GM12878 (cell line): ENCODE measurements at regions of chr16 and their contacts with region 1.

Region 1: GRCh38 chr16:22217889-22218730 is 12.0 kb downstream of the EEF2K start:
- DNase-seq: peak; percentile 83
- ATAC-seq: peak; percentile 99
- H3K4me3 ChIP-seq: peak overlapping the region; percentile 51; the same call in 1 of the 2 replicates
- H3K27ac ChIP-seq: peak overlapping the region; percentile 54
- H3K4me1 ChIP-seq: peaks cover 12% of the 10 kb centered on the region
- H3K27me3 ChIP-seq: no peaks in the 10 kb centered on the region
- CTCF ChIP-seq: no peak
- EP300 ChIP-seq: peak in 1 of 2 experiments; percentile 46; a peak in 1 of 4 replicates
- POLR2A ChIP-seq: peak; percentile 72
- RAD21 ChIP-seq: no peak

Region 2: GRCh38 chr16:22123146-22123545 is 95.0 kb before region 1 on chr16:
- CTCF ChIA-PET with region 1: no interaction called
- POLR2A ChIA-PET with region 1: no interaction called
- RAD21 ChIA-PET with region 1: no interaction called
- SMC1A ChIA-PET with region 1: no interaction called
- in situ Hi-C with region 1: no loop called
- intact Hi-C with region 1: no loop called
- DNase-seq: no peak
- ATAC-seq: peak; percentile 48
- H3K4me3 ChIP-seq: no peak overlapping the region
- H3K27ac ChIP-seq: no peak overlapping the region
- H3K4me1 ChIP-seq: no peaks in the 10 kb centered on the region
- H3K27me3 ChIP-seq: no peaks in the 10 kb centered on the region
- CTCF ChIP-seq: peak in 2 of 3 experiments; percentile 10 to 17; a peak in 2 of 6 replicates
- EP300 ChIP-seq: no peak
- POLR2A ChIP-seq: no peak
- RAD21 ChIP-seq: no peak

Region 3: GRCh38 chr16:22161999-22162655 is 56.0 kb before region 1 on chr16 and contains the start of gene SDR42E2:
- CTCF ChIA-PET with region 1: no interaction called
- POLR2A ChIA-PET with region 1: no interaction called
- RAD21 ChIA-PET with region 1: no interaction called
- SMC1A ChIA-PET with region 1: no interaction called
- in situ Hi-C with region 1: no loop called
- intact Hi-C with region 1: no loop called
- DNase-seq: no peak
- ATAC-seq: 0 out of 3 replicates have a peak, but pooled peaks have one; percentile 17
- H3K4me3 ChIP-seq: no peak within 1 kb of the TSS
- H3K27ac ChIP-seq: no peak within 1 kb of the TSS
- H3K4me1 ChIP-seq: no peaks in the 10 kb centered on the region
- H3K27me3 ChIP-seq: peaks cover 0 to 3% of the 10 kb centered on the region in 2 experiments; a peak in 3 of 4 replicates
- CTCF ChIP-seq: no peak
- EP300 ChIP-seq: no peak
- POLR2A ChIP-seq: no peak
- RAD21 ChIP-seq: no peak
- polyA plus RNA-seq, gene SDR42E2: 0.05 to 0.09 TPM

Region 4: GRCh38 chr16:22206013-22206841 is 11.9 kb before region 1 on chr16 and contains the start of gene EEF2K:
- CTCF ChIA-PET with region 1: interaction called, 38 read pairs
- POLR2A ChIA-PET with region 1: interaction called, 21 read pairs
- RAD21 ChIA-PET with region 1: interaction called, 24 read pairs
- SMC1A ChIA-PET with region 1: interaction called, 83 read pairs
- in situ Hi-C with region 1: no loop called
- intact Hi-C with region 1: no loop called
- DNase-seq: peak; percentile 83
- ATAC-seq: peak; percentile 92
- H3K4me3 ChIP-seq: peak within 1 kb of the TSS; percentile 88
- H3K27ac ChIP-seq: peak within 1 kb of the TSS; percentile 65
- H3K4me1 ChIP-seq: peaks cover 11% of the 10 kb centered on the region
- H3K27me3 ChIP-seq: no peaks in the 10 kb centered on the region
- CTCF ChIP-seq: peak; percentile 76 to 93 (median 76)
- EP300 ChIP-seq: peak; percentile 28 to 37; a peak in 2 of 4 replicates
- POLR2A ChIP-seq: peak; percentile 81
- RAD21 ChIP-seq: peak; percentile 59
- polyA plus RNA-seq, gene EEF2K: 2.0 to 2.4 TPM

Region 5: DNA sequence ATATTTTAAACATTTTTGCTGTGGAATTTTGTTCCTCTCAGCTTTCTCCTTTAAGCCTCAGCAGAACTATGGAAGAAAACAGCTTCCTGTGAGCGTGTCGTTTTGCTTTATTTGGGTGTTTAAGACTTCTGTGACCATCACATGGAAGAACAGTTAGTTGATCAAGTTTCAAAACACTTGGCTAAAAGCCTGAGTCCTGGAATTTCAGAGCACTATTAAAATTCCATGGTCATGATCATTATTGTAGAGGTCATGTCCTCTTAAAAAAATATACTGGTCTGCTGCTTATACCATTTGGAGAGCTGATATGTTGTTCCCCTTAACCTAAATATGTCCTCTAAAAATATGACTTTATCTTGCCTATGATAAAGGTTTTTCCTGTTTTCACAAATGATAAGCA is 168.9 kb after region 1 on chr16:
- CTCF ChIA-PET with region 1: no interaction called
- POLR2A ChIA-PET with region 1: no interaction called
- RAD21 ChIA-PET with region 1: no interaction called
- SMC1A ChIA-PET with region 1: no interaction called
- in situ Hi-C with region 1: no loop called
- intact Hi-C with region 1: no loop called
- DNase-seq: no peak
- ATAC-seq: no peak
- H3K4me3 ChIP-seq: no peak overlapping the region
- H3K27ac ChIP-seq: no peak overlapping the region
- H3K4me1 ChIP-seq: no peaks in the 10 kb centered on the region
- H3K27me3 ChIP-seq: no peaks in the 10 kb centered on the region
- CTCF ChIP-seq: no peak
- EP300 ChIP-seq: no peak
- POLR2A ChIP-seq: no peak
- RAD21 ChIP-seq: no peak